B cell (primary cell): ENCODE measurements at regions of chr17 and their contacts with region 1.

Region 1: DNA sequence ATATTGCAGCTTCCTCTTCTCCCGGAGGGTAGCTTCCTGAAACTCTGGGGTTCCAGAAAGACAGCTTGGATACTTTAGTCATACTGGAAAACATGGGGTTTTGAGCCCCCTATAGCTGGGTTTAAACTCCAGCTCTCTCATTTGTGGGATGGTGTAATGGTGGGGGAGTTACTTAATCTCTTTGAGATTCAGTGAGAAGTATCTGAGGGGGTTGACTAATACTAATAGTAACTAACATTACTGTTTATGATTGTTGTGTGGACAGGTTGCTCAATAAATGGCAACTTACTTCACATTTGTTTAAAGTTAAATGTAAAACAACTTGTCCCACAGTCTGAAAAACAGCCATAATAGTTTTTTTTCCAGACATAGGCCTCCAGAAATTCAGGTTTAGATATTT is 5.1 kb upstream of the SUZ12 start:
- DNase-seq: no peak
- ATAC-seq: no peak
- H3K4me3 ChIP-seq: no peak overlapping the region
- H3K4me3 Mint-ChIP-seq: no peak overlapping the region
- H3K27ac ChIP-seq: no peak overlapping the region
- H3K27ac Mint-ChIP-seq: no peak overlapping the region
- H3K4me1 ChIP-seq: peaks cover 0 to 5% of the 10 kb centered on the region in 2 donors
- H3K4me1 Mint-ChIP-seq: no peaks in the 10 kb centered on the region
- H3K27me3 ChIP-seq: no peaks in the 10 kb centered on the region
- H3K27me3 Mint-ChIP-seq: no peaks in the 10 kb centered on the region
- CTCF ChIP-seq: no peak

Region 2: GRCh38 chr17:31900877-31901276 is 30.9 kb before region 1 on chr17:
- CTCF ChIA-PET with region 1: interaction called, 3 read pairs
- POLR2A ChIA-PET with region 1: interaction called, 3 read pairs
- intact Hi-C with region 1: loop called (anchors 1 kb)
- DNase-seq: no peak
- ATAC-seq: no peak
- H3K4me3 ChIP-seq: peak overlapping the region; percentile 76 to 95 (median 90)
- H3K4me3 Mint-ChIP-seq: no peak overlapping the region
- H3K27ac ChIP-seq: peak overlapping the region; percentile 47 to 78
- H3K27ac Mint-ChIP-seq: no peak overlapping the region
- H3K4me1 ChIP-seq: peaks cover 6 to 10% of the 10 kb centered on the region in 2 donors
- H3K4me1 Mint-ChIP-seq: peaks cover 5% of the 10 kb centered on the region
- H3K27me3 ChIP-seq: no peaks in the 10 kb centered on the region
- H3K27me3 Mint-ChIP-seq: no peaks in the 10 kb centered on the region
- CTCF ChIP-seq: no peak

Region 3: GRCh38 chr17:32006957-32007462 is 75.3 kb after region 1 on chr17 and contains the start of gene LRRC37B:
- CTCF ChIA-PET with region 1: no interaction called
- POLR2A ChIA-PET with region 1: no interaction called
- intact Hi-C with region 1: loop called (anchors 5 kb)
- DNase-seq: peak; percentile 91
- ATAC-seq: peak; percentile 94
- H3K4me3 ChIP-seq: peak within 1 kb of the TSS; percentile 66 to 88 (median 78)
- H3K4me3 Mint-ChIP-seq: peak within 1 kb of the TSS; percentile 88
- H3K27ac ChIP-seq: peak within 1 kb of the TSS; percentile 6 to 59
- H3K27ac Mint-ChIP-seq: peak within 1 kb of the TSS; percentile 86
- H3K4me1 ChIP-seq: peaks cover 10 to 14% of the 10 kb centered on the region in 2 donors
- H3K4me1 Mint-ChIP-seq: peaks cover 34% of the 10 kb centered on the region
- H3K27me3 ChIP-seq: no peaks in the 10 kb centered on the region
- H3K27me3 Mint-ChIP-seq: no peaks in the 10 kb centered on the region
- CTCF ChIP-seq: peak; percentile 87
- total RNA-seq, gene LRRC37B: 40.6 and 46.7 TPM in 2 replicates